ENCODE measurements at regions of chr9 and their contacts with region 1.

Region 1: GRCh38 chr9:116149844-116150243 is 3.7 kb upstream of the PAPPA start:
- DNase-seq: no peak
- ATAC-seq: peak; percentile 77
- H3K4me3 ChIP-seq: no peak overlapping the region
- H3K27ac ChIP-seq: no peak overlapping the region
- H3K4me1 ChIP-seq: no peaks in the 10 kb centered on the region
- H3K27me3 ChIP-seq: peaks cover 3 to 15% of the 10 kb centered on the region in 2 experiments; a peak in 3 of 5 replicates
- CTCF ChIP-seq: peak; percentile 69
- EP300 ChIP-seq: no peak
- POLR2A ChIP-seq: no peak
- RAD21 ChIP-seq: no peak

Region 2: GRCh38 chr9:115591584-115591984 is 558.3 kb before region 1 on chr9:
- CTCF ChIA-PET with region 1: no interaction called
- POLR2A ChIA-PET with region 1: no interaction called
- in situ Hi-C with region 1: loop called (anchors 25 kb)
- intact Hi-C with region 1: loop called (anchors 5 kb)
- DNase-seq: peak; percentile 74
- ATAC-seq: peak; percentile 98
- H3K4me3 ChIP-seq: no peak overlapping the region
- H3K27ac ChIP-seq: no peak overlapping the region
- H3K4me1 ChIP-seq: no peaks in the 10 kb centered on the region
- H3K27me3 ChIP-seq: no peaks in the 10 kb centered on the region
- CTCF ChIP-seq: peak; percentile 70
- EP300 ChIP-seq: no peak
- POLR2A ChIP-seq: no peak
- RAD21 ChIP-seq: 0 out of 2 replicates have a peak, but pooled peaks have one; percentile 28

Region 3: DNA sequence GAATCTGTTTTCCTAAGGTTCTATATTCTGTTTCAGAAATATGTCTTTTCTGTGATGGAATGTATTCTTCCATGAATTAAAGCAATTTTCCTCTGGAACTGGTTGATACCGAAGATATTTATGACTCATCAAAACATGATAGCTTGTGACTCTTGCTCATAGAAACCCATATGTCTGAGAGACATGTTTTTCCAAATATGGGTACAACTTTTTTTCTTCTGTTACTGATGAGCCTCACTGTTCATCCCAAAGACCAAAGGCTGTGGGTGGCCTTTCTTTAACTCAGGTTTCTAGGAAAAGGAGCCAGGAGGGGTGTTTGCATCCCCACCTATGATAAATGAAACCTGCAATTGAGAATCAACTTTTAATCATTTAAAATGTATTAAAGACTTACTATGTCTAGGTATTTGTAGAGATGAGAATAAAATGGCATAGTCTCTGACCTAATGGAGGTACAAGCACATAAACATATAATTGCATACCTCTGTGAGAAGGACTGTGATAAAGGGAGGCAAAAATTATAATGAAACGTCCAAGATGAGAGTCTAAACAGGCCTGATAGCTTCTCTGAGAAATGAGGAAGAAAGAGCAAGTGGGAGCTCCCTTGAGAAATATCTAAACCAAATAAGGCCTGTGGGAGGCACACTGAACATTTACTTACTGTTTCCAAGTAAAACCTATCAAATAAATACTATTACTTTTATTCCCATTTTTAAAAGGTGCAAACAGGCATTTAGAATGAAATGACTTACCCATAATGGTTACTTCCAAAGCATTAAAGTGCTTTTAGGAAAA is 122.1 kb before region 1 on chr9:
- CTCF ChIA-PET with region 1: no interaction called
- POLR2A ChIA-PET with region 1: no interaction called
- in situ Hi-C with region 1: loop called (anchors 25 kb)
- intact Hi-C with region 1: no loop called
- DNase-seq: no peak
- ATAC-seq: no peak
- H3K4me3 ChIP-seq: no peak overlapping the region
- H3K27ac ChIP-seq: no peak overlapping the region
- H3K4me1 ChIP-seq: no peaks in the 10 kb centered on the region
- H3K27me3 ChIP-seq: no peaks in the 10 kb centered on the region
- CTCF ChIP-seq: no peak
- EP300 ChIP-seq: no peak
- POLR2A ChIP-seq: no peak
- RAD21 ChIP-seq: no peak

Region 4: DNA sequence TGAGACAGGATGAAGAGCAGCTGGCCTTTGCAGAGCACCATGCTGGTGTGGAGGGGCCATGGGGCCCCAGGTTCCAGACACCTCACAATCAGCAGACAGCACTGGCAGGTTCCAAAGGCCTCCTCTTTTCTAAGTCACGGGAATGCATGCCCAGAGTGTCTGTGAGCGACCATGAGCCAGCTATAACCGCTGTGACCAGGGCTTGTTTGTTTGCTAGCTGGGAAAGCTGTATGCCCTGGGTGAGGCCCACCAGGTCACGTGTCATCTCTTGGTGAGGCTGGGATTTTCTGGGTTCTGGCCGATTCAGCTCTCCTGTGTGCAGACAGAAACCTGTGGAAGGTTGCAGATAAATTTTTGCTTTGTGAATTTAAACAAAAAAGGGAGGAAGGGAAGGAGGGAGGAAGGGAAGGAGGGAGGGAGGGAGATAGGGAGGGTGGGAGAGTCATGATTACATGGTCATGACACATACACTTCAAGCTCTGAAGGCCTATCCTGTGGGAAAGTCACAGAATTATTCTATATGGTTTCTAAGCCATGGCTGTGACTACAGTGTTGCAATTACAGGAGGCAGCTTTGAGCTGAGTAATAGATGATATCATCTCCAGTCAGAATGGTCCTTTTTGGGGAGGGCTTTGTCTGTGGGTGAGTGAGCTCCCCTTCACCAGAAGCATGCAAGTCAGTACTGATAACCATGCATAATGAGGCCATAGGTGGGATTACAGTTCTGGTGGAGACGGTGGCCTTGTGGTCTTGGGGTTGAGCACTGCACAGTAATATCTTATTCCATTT is 41.0 kb after region 1 on chr9:
- CTCF ChIA-PET with region 1: no interaction called
- POLR2A ChIA-PET with region 1: no interaction called
- in situ Hi-C with region 1: no loop called
- intact Hi-C with region 1: no loop called
- DNase-seq: peak; percentile 5
- ATAC-seq: peak; percentile 55
- H3K4me3 ChIP-seq: no peak overlapping the region
- H3K27ac ChIP-seq: no peak overlapping the region
- H3K4me1 ChIP-seq: peaks cover 15% of the 10 kb centered on the region
- H3K27me3 ChIP-seq: 0 out of 5 replicates have a peak, but pooled peaks cover 0 to 5% of the 10 kb centered on the region in 2 experiments
- CTCF ChIP-seq: no peak
- EP300 ChIP-seq: no peak
- POLR2A ChIP-seq: no peak
- RAD21 ChIP-seq: no peak